Activated CD4-positive, alpha-beta memory T cell treated with anti-CD3 and anti-CD28 coated beads for 36 hours (primary cell): ENCODE measurements at regions of chr16 and their contacts with region 1.

Region 1: GRCh38 chr16:72832621-72833248 is 215.2 kb downstream of the ZFHX3 start:
- DNase-seq: peak; percentile 76
- H3K4me3 Mint-ChIP-seq: no peak overlapping the region
- H3K27ac Mint-ChIP-seq: no peak overlapping the region
- H3K4me1 Mint-ChIP-seq: no peaks in the 10 kb centered on the region
- H3K27me3 Mint-ChIP-seq: peaks cover 3% of the 10 kb centered on the region

Region 2: DNA sequence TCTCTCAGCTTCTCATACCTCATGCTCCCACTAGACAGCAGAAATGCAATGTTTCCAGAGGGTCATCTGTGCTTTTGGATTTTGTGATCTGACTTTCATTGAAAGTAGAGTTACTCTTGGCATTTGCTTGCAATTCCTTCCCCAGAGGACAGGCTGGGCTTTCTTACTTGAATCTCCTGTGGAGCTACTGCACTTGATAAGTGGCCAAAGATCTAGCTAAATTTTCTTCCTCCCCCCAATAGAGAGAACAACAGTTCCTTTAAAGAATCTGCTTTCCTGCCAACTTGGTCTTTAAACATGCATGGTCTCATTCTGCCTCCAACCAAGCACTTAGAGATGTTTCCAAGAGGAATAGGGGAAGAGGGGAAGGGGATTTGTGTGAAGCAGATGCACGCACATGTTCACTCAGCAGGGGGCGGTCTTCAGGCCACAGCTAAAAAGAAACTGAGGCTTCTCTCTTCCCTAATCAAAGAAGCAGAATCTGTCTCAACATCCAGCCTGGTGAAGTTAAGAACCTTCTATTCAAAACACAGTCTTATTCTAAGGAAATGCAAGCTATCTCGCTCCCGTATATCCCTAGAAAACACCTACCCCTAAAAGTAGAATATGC is 14.4 kb before region 1 on chr16:
- CTCF ChIA-PET with region 1: interaction called, 17 read pairs
- POLR2A ChIA-PET with region 1: no interaction called
- intact Hi-C with region 1: no loop called
- DNase-seq: no peak
- H3K4me3 Mint-ChIP-seq: no peak overlapping the region
- H3K27ac Mint-ChIP-seq: no peak overlapping the region
- H3K4me1 Mint-ChIP-seq: no peaks in the 10 kb centered on the region
- H3K27me3 Mint-ChIP-seq: peaks cover 2% of the 10 kb centered on the region

Region 3: DNA sequence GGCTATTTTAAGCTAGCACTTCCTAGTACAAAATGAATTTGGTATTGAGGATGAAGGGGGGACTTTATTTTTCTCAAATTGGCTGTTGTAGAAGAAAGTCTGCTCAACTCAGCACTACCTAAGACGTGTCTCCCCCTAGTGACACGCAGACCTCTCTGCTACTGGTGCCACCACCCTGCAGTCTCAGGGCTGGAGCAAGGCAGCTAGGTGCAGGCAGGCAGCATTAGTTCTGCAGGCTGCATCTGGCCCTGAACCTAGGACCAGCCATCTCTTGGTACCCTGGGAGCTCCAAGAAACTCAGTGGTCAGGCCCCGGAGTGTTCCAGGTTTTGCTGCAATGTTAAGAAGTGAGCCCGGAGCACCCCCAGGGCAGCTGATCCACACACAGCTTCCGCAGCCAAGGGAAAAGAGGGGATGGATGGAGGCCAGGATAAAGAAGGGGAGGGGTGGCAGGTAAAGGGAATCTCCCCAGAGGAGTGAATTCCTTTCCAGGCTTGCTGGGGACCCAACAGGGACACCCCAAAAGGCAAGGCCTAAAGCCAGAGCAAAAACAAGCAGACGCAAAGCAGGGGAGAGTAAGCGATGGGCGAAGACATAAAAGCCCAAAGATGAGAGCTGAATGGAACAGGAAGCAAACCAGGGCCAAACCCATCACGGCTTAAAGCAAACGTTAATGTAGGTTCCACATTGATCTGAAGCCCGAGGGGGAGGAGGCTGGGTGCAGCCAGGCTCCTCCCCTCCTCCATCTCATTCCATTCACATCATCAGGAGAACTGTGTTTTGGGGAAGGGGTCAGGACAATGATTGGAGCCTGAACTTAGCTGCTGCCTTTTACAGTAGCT is 14.7 kb after region 1 on chr16:
- CTCF ChIA-PET with region 1: interaction called, 19 read pairs
- POLR2A ChIA-PET with region 1: no interaction called
- intact Hi-C with region 1: no loop called
- DNase-seq: no peak
- H3K4me3 Mint-ChIP-seq: no peak overlapping the region
- H3K27ac Mint-ChIP-seq: no peak overlapping the region
- H3K4me1 Mint-ChIP-seq: no peaks in the 10 kb centered on the region
- H3K27me3 Mint-ChIP-seq: peaks cover 4% of the 10 kb centered on the region

Region 4: DNA sequence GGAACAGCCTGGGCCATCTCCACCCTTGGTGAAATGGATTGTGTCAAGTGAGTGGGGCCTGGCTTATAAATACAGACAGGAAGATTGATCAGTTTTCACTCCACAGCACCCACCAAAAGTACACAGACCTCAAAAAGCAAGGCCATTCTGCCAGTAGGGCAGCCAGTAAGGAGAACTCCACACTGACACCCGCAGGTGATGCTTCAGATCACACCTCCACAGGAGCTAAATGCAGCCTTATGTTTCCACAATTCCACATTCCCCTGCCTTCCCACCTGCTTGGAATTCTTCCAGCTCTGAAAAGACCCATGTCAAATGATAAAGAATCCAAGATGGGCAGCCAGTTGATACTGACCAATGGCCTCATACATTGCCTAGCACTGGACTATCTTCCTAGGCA is 24.1 kb after region 1 on chr16:
- CTCF ChIA-PET with region 1: interaction called, 20 read pairs
- POLR2A ChIA-PET with region 1: no interaction called
- intact Hi-C with region 1: no loop called
- DNase-seq: peak; percentile 15
- H3K4me3 Mint-ChIP-seq: no peak overlapping the region
- H3K27ac Mint-ChIP-seq: no peak overlapping the region
- H3K4me1 Mint-ChIP-seq: no peaks in the 10 kb centered on the region
- H3K27me3 Mint-ChIP-seq: no peaks in the 10 kb centered on the region

Region 5: DNA sequence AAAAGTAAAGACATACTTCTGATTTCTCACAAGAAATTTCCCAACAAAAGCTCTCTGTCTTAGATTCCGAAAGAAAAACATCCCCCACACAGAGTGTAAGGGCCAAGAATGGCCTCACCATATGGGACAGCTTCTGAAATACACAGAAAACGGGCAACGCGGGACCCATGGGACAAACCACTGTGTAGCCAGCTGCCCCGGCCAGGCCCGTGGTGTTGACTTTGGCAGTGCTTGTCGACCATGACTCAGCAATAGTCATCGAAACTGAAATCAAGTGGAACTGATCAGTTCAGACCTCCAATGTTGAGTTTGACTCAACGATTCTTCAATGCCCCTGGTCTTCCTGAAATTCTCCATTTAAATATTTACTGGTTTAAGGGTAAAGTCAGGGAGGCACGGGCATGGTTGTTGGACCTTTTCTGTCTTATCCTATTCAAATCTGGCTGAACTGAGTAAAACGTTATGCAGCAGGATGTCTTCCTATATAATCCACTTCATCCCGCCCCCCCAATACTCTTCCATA is 187.7 kb after region 1 on chr16:
- CTCF ChIA-PET with region 1: no interaction called
- POLR2A ChIA-PET with region 1: no interaction called
- intact Hi-C with region 1: no loop called
- DNase-seq: no peak
- H3K4me3 Mint-ChIP-seq: no peak overlapping the region
- H3K27ac Mint-ChIP-seq: no peak overlapping the region
- H3K4me1 Mint-ChIP-seq: no peaks in the 10 kb centered on the region
- H3K27me3 Mint-ChIP-seq: no peaks in the 10 kb centered on the region

Region 6: GRCh38 chr16:73047518-73048291 is 215.0 kb after region 1 on chr16 and contains the start of gene ZFHX3:
- CTCF ChIA-PET with region 1: no interaction called
- POLR2A ChIA-PET with region 1: no interaction called
- intact Hi-C with region 1: loop called (anchors 10 kb)
- DNase-seq: peak; percentile 23
- H3K4me3 Mint-ChIP-seq: peak within 1 kb of the TSS; percentile 14
- H3K27ac Mint-ChIP-seq: no peak within 1 kb of the TSS
- H3K4me1 Mint-ChIP-seq: no peaks in the 10 kb centered on the region
- H3K27me3 Mint-ChIP-seq: peaks cover 34% of the 10 kb centered on the region
- total RNA-seq, gene ZFHX3: 0.21 to 0.68 TPM

Region 7: DNA sequence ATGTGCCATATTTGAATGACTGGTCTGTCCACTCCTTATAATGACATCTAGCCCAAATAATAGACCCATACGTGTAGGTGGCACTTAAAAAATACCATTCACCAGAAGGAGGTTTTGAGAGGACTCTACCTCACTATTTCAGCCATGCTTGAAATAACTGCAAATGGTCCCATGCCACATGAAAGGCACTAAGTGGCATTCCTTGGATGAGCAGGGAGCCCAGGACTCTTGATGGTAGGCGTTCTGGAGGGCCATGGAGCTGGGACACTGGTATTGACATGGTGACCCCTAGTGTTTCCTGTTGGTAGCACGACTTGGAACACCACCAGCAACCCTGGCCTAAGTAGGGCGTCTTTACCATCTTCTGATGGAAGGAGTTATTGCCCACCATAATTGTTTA is 363.9 kb after region 1 on chr16:
- CTCF ChIA-PET with region 1: interaction called, 5 read pairs
- POLR2A ChIA-PET with region 1: no interaction called
- intact Hi-C with region 1: loop called (anchors 10 kb)
- DNase-seq: peak; percentile 9
- H3K4me3 Mint-ChIP-seq: no peak overlapping the region
- H3K27ac Mint-ChIP-seq: no peak overlapping the region
- H3K4me1 Mint-ChIP-seq: no peaks in the 10 kb centered on the region
- H3K27me3 Mint-ChIP-seq: no peaks in the 10 kb centered on the region

Region 8: DNA sequence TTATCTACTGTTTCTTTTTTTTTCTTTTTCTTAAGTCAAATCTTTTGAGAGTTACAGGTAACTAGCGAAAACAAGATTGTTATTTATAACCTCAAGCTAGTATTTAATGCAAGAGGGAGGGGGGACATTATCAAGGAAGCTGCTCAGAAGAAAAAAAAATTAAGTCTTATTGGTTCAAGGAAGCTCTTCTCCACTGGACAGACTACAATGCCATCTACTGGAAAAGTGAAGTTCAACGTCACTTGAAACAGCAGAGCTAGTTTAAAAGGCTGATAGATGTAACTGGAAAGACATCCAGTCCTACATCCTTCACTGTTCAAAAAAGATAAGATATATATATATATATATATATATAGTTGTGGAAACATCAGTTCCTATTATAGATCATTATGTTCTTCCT is 1045.9 kb after region 1 on chr16:
- CTCF ChIA-PET with region 1: interaction called, 15 read pairs
- POLR2A ChIA-PET with region 1: no interaction called
- intact Hi-C with region 1: no loop called
- DNase-seq: no peak
- H3K4me3 Mint-ChIP-seq: no peak overlapping the region
- H3K27ac Mint-ChIP-seq: no peak overlapping the region
- H3K4me1 Mint-ChIP-seq: no peaks in the 10 kb centered on the region
- H3K27me3 Mint-ChIP-seq: no peaks in the 10 kb centered on the region